Thyroid gland (tissue), 4 donors: ENCODE measurements at regions of chr3 and their contacts with region 1.

Region 1: GRCh38 chr3:15268033-15268631 is 62.1 kb downstream of the CAPN7 start:
- DNase-seq: peak; percentile 90 to 92
- H3K4me3 ChIP-seq: no peak overlapping the region
- H3K27ac ChIP-seq: peak overlapping the region; percentile 5 to 88 (median 68)
- H3K4me1 ChIP-seq: peaks cover 37 to 68% of the 10 kb centered on the region in 2 donors
- H3K27me3 ChIP-seq: no peaks in the 10 kb centered on the region
- CTCF ChIP-seq: peak; percentile 77 to 96 (median 94)
- POLR2A ChIP-seq: no peak

Region 2: GRCh38 chr3:15205934-15206661 is 62.0 kb before region 1 on chr3 and contains the start of gene CAPN7:
- intact Hi-C with region 1: loop called (anchors 10 kb)
- DNase-seq: peak; percentile 97
- H3K4me3 ChIP-seq: peak within 1 kb of the TSS; percentile 70 to 99 (median 99)
- H3K27ac ChIP-seq: peak within 1 kb of the TSS; percentile 95 to 99 (median 97)
- H3K4me1 ChIP-seq: peaks cover 8 to 18% of the 10 kb centered on the region in 2 donors
- H3K27me3 ChIP-seq: no peaks in the 10 kb centered on the region
- CTCF ChIP-seq: peak in 3 of 6 experiments; percentile 39 to 56 (median 51)
- POLR2A ChIP-seq: peak; percentile 82 to 97
- total RNA-seq, gene CAPN7: 87.8 to 147 (median 116) TPM

Region 3: GRCh38 chr3:15332405-15333098 is 64.4 kb after region 1 on chr3 and contains the start of gene SH3BP5:
- intact Hi-C with region 1: loop called (anchors 5 kb)
- DNase-seq: peak; percentile 80 to 84
- H3K4me3 ChIP-seq: peak within 1 kb of the TSS; percentile 93 to 97 (median 94)
- H3K27ac ChIP-seq: peak within 1 kb of the TSS; percentile 88 to 94 (median 91)
- H3K4me1 ChIP-seq: peaks cover 38 to 47% of the 10 kb centered on the region in 2 donors
- H3K27me3 ChIP-seq: no peaks in the 10 kb centered on the region
- CTCF ChIP-seq: peak; percentile 23 to 91 (median 76)
- POLR2A ChIP-seq: peak; percentile 12 to 85
- total RNA-seq, gene SH3BP5: 60.2 to 90.4 (median 82.0) TPM

Region 4: DNA sequence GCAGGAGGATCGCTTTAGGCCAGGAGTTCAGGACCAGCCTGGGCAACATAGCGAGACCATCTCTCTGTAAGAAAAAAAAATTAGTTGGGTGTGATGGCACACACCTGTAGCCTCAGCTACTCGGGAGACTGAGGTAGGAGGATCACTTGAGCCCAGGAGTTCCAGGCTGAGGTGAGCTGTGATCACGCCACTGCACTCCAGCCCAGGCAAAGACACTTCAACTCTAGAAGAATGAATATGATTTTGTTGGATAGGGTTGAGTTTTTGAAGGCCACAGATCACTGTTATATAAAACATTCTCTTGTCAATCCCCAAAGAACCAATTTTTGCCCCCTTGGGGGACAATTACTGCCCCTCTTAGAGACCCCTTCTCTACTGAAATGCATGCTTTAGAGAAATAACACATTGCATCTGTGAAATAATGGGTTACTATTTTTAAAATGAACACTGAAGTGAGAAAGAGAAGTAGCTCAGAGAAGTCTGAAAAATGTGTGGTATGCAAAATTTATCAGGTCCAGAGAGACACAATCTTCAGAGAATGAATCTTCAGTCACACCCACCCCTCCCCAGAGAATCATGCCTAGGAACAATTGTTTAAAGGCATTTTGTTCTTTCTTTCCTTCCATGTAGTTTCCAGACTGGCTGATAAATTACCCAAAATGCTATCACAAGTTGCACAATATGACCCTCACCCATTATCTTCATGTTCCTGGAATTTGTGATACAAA is 116.5 kb after region 1 on chr3:
- intact Hi-C with region 1: loop called (anchors 5 kb)
- DNase-seq: no peak
- H3K4me3 ChIP-seq: no peak overlapping the region
- H3K27ac ChIP-seq: no peak overlapping the region
- H3K4me1 ChIP-seq: peaks cover 10 to 17% of the 10 kb centered on the region in 2 donors
- H3K27me3 ChIP-seq: no peaks in the 10 kb centered on the region
- CTCF ChIP-seq: no peak
- POLR2A ChIP-seq: no peak